ENCODE measurements at regions of chr4 and their contacts with region 1.

Region 1: GRCh38 chr4:173025131-173025530 is 143.5 kb upstream of the GALNT7 start:
- DNase-seq: no peak
- ATAC-seq: peak; percentile 76

Region 2: DNA sequence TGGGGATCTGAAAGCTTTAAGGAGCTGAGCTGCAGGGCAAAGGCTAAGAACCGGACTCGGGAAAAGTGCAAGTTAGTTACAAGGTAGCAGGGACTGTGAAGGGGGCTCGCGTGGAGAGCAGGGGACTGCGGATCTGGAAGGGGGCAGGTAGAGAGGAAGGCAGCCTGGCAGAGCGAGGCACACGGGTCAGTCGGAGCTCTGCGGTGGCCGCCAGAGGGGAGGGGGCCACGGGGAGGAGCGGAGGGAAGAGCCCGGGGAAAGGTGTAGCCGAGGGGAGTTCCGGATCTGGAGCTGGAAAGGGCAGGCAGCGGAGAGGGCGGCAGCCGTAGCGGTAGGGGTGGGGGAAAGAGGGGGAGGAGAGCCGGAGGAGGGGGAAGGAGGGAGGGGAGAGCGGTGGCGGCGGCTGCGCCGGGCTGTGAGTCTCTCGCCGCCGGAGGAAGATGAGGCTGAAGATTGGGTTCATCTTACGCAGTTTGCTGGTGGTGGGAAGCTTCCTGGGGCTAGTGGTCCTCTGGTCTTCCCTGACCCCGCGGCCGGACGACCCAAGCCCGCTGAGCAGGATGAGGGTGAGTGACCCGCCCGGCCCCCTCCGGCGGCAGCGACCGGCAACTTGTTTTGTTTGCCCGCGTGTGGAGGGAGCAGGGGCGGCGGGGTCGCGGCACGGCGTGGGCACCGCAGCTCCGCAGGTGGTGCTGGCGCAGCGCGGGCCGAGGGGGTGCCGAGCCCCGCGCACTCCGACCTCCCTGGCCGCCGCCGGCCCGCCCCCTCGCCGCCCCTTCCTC is 143.5 kb after region 1 on chr4 and contains the start of gene GALNT7:
- intact Hi-C with region 1: loop called (anchors 5 kb)
- DNase-seq: peak; percentile 84
- ATAC-seq: peak; percentile 72
- total RNA-seq, gene GALNT7: 5.1 TPM